Transverse colon (tissue), 4 donors: ENCODE measurements at regions of chr1 and their contacts with region 1.

Region 1: GRCh38 chr1:107782217-107782845 is 182.6 kb downstream of the VAV3 start:
- DNase-seq: no peak
- H3K4me3 ChIP-seq: no peak overlapping the region
- H3K27ac ChIP-seq: no peak overlapping the region
- H3K4me1 ChIP-seq: peaks cover 0 to 3% (median 0%) of the 10 kb centered on the region in 4 donors
- H3K27me3 ChIP-seq: no peaks in the 10 kb centered on the region
- CTCF ChIP-seq: peak; percentile 66 to 76 (median 71)
- EP300 ChIP-seq: no peak
- POLR2A ChIP-seq: no peak

Region 2: DNA sequence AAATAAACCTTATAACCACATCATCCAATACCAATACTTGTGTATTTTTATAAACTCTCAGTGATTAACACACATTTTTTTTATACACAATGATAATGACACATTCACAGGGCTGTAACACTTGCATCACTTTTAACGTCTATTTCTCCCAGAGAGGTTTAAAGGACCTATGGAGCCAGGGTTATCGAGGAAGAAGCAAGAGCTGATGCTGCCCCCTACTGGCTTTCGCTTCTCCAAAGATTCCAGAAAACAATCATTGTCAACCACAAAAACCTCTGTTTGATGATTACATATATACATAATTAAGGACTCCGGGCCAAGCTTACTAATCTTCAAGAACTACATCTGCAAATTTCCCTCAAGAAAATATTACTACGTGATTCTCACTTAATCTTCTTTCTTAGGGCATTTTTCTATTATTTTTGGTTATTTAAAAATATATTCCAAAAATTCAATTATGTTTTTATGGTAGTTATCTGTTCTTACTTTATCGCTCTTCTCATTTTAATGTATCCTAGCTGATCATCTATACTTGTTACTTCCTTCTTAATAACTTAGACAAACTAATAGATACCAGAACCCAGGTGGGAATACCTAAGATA is 31.9 kb before region 1 on chr1:
- in situ Hi-C with region 1: no loop called
- intact Hi-C with region 1: no loop called
- DNase-seq: peak; percentile 80
- H3K4me3 ChIP-seq: no peak overlapping the region
- H3K27ac ChIP-seq: no peak overlapping the region
- H3K4me1 ChIP-seq: no peaks in the 10 kb centered on the region
- H3K27me3 ChIP-seq: no peaks in the 10 kb centered on the region
- CTCF ChIP-seq: peak; percentile 61 to 77 (median 68)
- EP300 ChIP-seq: no peak
- POLR2A ChIP-seq: no peak

Region 3: GRCh38 chr1:108125312-108126138 is 343.2 kb after region 1 on chr1:
- in situ Hi-C with region 1: loop called in 2 of 4 experiments (anchors 5 kb)
- intact Hi-C with region 1: loop called (anchors 5 kb)
- DNase-seq: peak; percentile 60
- H3K4me3 ChIP-seq: no peak overlapping the region
- H3K27ac ChIP-seq: no peak overlapping the region
- H3K4me1 ChIP-seq: peaks cover 0 to 4% (median 0%) of the 10 kb centered on the region in 4 donors
- H3K27me3 ChIP-seq: peaks cover 3% of the 10 kb centered on the region
- CTCF ChIP-seq: peak; percentile 79 to 92 (median 88)
- EP300 ChIP-seq: no peak
- POLR2A ChIP-seq: no peak

Region 4: GRCh38 chr1:108141621-108142020 is 359.3 kb after region 1 on chr1:
- in situ Hi-C with region 1: loop called in 1 of 4 experiments (anchors 5 kb)
- intact Hi-C with region 1: no loop called
- DNase-seq: no peak
- H3K4me3 ChIP-seq: no peak overlapping the region
- H3K27ac ChIP-seq: no peak overlapping the region
- H3K4me1 ChIP-seq: no peaks in the 10 kb centered on the region
- H3K27me3 ChIP-seq: no peaks in the 10 kb centered on the region
- CTCF ChIP-seq: no peak
- EP300 ChIP-seq: no peak
- POLR2A ChIP-seq: no peak